Activated naive CD4-positive, alpha-beta T cell treated with anti-CD3 and anti-CD28 coated beads for 36 hours (primary cell): ENCODE measurements at regions of chr9 and their contacts with region 1.

Region 1: DNA sequence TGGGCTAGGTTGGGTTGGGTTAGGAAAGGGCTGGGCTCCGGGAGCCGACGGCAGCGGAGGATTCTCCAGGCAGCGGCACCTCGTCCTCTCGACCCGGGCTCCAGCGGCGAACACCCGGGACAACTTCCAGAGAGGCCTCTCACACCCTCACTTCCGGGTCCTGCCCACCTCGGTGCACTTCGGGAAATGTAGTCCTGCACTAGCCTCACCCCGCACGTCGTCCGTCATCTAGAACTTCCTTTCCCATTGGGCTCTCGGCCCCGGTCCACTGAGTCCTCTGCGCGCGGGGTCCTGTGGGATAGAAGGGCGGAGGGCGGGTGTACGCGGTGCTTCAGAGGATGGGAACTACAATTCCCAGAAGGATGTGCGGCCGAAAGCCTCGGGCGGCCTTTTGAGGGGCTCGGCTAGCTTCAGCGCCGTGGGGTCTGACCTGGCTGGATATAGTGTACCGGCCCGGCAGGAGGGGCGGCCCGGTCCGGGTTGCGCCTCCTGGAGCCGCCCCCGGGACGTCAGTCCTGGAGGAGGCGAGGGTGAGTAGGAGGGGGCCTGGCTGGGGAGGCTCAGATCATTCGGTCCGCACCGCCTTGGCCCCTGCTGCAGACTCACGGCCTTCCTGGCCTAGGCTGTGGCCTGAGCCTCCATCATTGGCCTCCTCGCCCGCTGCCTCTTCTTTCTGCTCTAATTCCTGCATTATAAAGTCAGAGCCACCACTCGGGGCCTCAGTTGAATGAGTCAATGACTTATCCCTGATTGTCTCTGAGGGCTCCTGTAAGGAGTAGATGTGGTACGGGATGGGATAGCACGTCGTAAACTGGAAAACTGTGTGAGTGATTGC is at the starts of genes ERP44 and INVS:
- DNase-seq: peak; percentile 99
- H3K4me3 Mint-ChIP-seq: peak within 1 kb of the TSS; percentile 97
- H3K27ac Mint-ChIP-seq: peak within 1 kb of the TSS; percentile 79
- H3K4me1 Mint-ChIP-seq: peaks cover 29% of the 10 kb centered on the region
- H3K27me3 Mint-ChIP-seq: no peaks in the 10 kb centered on the region
- total RNA-seq, gene ERP44: 9.1 to 9.5 TPM
- total RNA-seq, gene INVS: 5.7 to 7.3 TPM

Region 2: GRCh38 chr9:99221621-99222415 is 877.3 kb before region 1 on chr9 and contains the starts of genes ALG2 and SEC61B:
- CTCF ChIA-PET with region 1: no interaction called
- intact Hi-C with region 1: loop called (anchors 1 kb)
- DNase-seq: peak; percentile 94
- H3K4me3 Mint-ChIP-seq: peak within 1 kb of the TSS; percentile 97
- H3K27ac Mint-ChIP-seq: peak within 1 kb of the TSS; percentile 98
- H3K4me1 Mint-ChIP-seq: peaks cover 56% of the 10 kb centered on the region
- H3K27me3 Mint-ChIP-seq: no peaks in the 10 kb centered on the region
- total RNA-seq, gene ALG2: 11.3 to 11.8 TPM
- total RNA-seq, gene SEC61B: 105 TPM

Region 3: GRCh38 chr9:99259231-99259918 is 839.7 kb before region 1 on chr9:
- CTCF ChIA-PET with region 1: no interaction called
- intact Hi-C with region 1: loop called (anchors 10 kb)
- DNase-seq: peak; percentile 73
- H3K4me3 Mint-ChIP-seq: no peak overlapping the region
- H3K27ac Mint-ChIP-seq: no peak overlapping the region
- H3K4me1 Mint-ChIP-seq: peaks cover 17% of the 10 kb centered on the region
- H3K27me3 Mint-ChIP-seq: peaks cover 17% of the 10 kb centered on the region

Region 4: GRCh38 chr9:99906403-99907207 is 192.5 kb before region 1 on chr9 and contains the start of gene STX17:
- CTCF ChIA-PET with region 1: no interaction called
- intact Hi-C with region 1: loop called (anchors 1 kb)
- DNase-seq: peak; percentile 75
- H3K4me3 Mint-ChIP-seq: peak within 1 kb of the TSS; percentile 95
- H3K27ac Mint-ChIP-seq: peak within 1 kb of the TSS; percentile 95
- H3K4me1 Mint-ChIP-seq: peaks cover 22% of the 10 kb centered on the region
- H3K27me3 Mint-ChIP-seq: no peaks in the 10 kb centered on the region
- total RNA-seq, gene STX17: 28.1 to 31.6 TPM

Region 5: DNA sequence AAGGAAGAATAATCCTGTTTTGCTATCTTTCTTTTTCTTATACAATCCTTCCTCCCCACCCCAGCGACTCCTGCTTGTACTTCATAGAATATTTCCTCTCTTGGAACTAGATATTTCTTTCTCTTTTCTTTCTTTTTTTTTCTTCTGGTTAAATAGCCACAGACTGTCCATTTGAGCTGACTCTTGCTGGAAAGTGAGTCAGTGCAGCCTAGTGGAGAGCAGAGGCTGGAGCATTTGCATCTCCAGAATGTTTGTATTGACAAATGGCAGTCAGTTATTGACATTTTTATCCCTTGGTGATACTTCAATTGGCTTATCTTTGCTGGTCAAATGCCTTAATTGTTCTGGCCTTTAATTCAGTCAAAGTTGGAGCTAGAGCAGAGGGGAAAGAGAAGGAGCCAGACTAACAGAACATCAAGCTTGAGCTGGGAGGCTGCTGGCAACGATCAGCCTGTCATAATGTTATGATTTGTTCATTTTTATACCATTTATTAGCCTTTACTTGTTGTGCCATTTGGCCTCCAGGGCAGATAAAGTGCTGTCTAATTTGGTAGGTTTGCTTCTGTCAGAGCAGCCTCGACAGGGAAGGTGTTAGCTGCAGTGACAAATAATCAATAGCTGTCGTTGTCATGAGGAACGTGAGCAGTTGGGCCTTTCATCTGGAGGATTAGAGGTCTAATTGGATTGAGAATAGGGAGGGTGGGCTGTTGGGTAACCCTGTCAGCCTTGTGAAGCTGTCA is 69.0 kb after region 1 on chr9:
- CTCF ChIA-PET with region 1: no interaction called
- intact Hi-C with region 1: no loop called
- DNase-seq: no peak
- H3K4me3 Mint-ChIP-seq: no peak overlapping the region
- H3K27ac Mint-ChIP-seq: no peak overlapping the region
- H3K4me1 Mint-ChIP-seq: no peaks in the 10 kb centered on the region
- H3K27me3 Mint-ChIP-seq: no peaks in the 10 kb centered on the region

Region 6: DNA sequence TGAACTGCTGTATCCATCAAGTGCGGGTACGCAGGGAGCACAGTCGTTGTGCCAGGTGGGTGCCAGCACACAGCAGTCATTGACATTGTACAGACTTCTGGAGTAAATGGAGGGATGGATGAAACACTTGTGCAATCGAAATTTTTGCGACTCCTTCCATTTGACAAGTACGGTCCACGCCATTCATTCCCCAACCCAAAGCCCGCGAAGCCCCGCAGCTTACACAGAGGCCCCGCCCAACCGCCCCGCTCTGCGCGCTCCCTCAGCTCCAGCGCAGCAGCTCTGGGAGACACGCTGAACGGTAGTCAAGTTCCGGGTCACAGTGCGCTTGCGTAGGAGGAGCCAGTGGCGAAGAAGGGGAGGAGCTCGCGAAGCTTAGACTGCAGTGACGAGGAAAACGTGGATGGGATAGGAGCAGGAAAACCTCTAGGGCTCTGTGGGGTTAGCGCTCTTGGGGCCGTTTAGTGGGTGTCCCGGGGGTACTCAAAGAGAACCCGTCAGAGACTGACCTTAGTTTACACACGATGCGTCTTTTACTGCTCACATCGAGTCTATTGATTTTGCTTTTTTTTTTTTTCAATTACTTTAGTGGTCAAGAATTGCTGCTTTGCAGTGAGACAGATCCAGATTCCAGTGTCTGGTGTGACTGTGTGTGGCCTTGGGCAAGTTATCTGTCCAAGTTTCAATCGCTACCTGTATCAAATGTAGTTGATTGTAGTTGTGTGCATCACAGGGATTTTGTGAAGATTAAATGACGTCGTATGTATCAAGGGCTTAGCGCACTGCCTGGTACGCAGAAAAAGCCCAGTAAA is 312.6 kb after region 1 on chr9:
- CTCF ChIA-PET with region 1: no interaction called
- intact Hi-C with region 1: loop called (anchors 1 kb)
- DNase-seq: peak; percentile 93
- H3K4me3 Mint-ChIP-seq: peak overlapping the region; percentile 82
- H3K27ac Mint-ChIP-seq: peak overlapping the region; percentile 32
- H3K4me1 Mint-ChIP-seq: peaks cover 13% of the 10 kb centered on the region
- H3K27me3 Mint-ChIP-seq: peaks cover 17% of the 10 kb centered on the region